CD8-positive, alpha-beta T cell (primary cell): ENCODE measurements at regions of chr6 and their contacts with region 1.

Region 1: DNA sequence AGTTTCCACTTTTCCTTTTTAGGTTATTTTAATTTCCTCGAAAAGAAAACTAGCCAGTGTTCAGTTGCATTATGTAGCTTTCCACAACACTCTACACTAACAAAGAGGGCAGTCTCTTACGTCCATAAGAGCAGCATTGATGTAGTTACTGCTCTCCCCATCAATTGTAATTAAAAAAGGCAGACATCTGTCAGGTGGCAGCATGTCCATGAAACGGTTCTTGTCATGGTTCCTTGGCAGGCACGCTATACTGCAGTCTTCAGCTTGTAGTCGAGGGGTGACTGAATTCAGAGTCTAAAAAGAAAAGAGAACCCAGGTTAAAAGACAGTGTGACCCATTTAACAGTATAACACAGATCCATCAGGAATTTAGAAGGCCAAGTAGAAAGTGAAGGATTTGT is 80.1 kb upstream of the THEMIS start:
- DNase-seq: no peak
- ATAC-seq: no peak
- H3K4me3 ChIP-seq: peak overlapping the region in 1 of 2 experiments; percentile 3
- H3K4me3 Mint-ChIP-seq: peak overlapping the region; percentile 76
- H3K27ac ChIP-seq: peak overlapping the region in 1 of 2 experiments; percentile 0
- H3K27ac Mint-ChIP-seq: peak overlapping the region; percentile 78
- H3K4me1 ChIP-seq: peaks cover 40% of the 10 kb centered on the region
- H3K4me1 Mint-ChIP-seq: peaks cover 61% of the 10 kb centered on the region
- H3K27me3 ChIP-seq: no peaks in the 10 kb centered on the region
- H3K27me3 Mint-ChIP-seq: no peaks in the 10 kb centered on the region
- CTCF ChIP-seq: no peak

Region 2: DNA sequence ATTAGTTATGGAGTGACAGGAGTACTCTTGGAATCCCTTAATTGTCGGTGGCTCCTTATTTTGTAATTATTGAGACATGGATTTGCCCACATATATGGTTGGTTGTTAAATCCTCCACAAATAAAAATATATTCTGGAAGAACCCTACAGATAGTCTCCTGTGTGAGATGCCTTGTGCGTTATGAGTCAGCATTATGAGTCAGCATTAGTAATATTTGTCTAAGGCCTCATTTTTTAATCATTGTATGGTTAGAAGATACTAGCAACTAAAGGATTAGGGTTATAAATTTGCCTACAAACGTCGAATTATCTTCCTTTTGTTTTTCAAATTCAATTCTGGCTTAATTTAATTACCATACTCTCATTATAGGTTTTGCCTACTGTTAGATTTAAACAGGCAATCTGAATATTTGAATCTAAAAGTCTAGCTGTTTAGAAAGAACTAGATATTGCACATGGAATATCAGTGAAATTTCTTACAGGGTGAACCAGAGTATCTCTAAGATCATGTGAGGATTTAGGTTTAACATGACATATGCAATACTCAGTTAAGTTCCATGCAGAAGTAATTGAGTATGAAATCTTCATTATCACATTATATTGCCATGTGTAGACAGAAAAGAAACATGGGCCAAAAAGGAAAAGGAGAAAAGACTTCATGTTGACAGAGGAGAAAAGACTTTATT is 398.1 kb before region 1 on chr6:
- CTCF ChIA-PET with region 1: no interaction called
- POLR2A ChIA-PET with region 1: no interaction called
- intact Hi-C with region 1: no loop called
- DNase-seq: no peak
- ATAC-seq: no peak
- H3K4me3 ChIP-seq: no peak overlapping the region
- H3K4me3 Mint-ChIP-seq: no peak overlapping the region
- H3K27ac ChIP-seq: no peak overlapping the region
- H3K27ac Mint-ChIP-seq: no peak overlapping the region
- H3K4me1 ChIP-seq: no peaks in the 10 kb centered on the region
- H3K4me1 Mint-ChIP-seq: no peaks in the 10 kb centered on the region
- H3K27me3 ChIP-seq: no peaks in the 10 kb centered on the region
- H3K27me3 Mint-ChIP-seq: no peaks in the 10 kb centered on the region
- CTCF ChIP-seq: no peak

Region 3: DNA sequence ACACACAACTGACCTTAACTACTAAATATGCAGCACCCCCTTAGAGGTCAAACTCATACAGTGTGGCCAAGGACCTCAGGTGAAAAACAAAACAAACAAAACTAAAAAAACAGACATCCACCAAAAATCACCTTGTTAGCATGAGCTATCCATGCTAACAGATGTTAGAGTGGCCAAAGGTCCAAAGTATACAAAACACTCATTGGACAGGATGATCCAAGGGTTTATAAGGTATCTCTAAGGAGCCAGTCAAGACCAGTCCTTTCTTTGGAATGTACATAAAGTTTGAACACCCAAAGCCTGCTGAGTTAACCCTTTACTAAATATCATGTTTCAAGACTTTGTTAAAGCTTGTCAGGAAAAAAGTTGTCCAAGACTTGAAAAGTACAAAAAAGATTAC is 115.9 kb before region 1 on chr6:
- CTCF ChIA-PET with region 1: no interaction called
- POLR2A ChIA-PET with region 1: no interaction called
- intact Hi-C with region 1: no loop called
- DNase-seq: no peak
- ATAC-seq: no peak
- H3K4me3 ChIP-seq: no peak overlapping the region
- H3K4me3 Mint-ChIP-seq: no peak overlapping the region
- H3K27ac ChIP-seq: peak overlapping the region in 1 of 2 experiments; percentile 9
- H3K27ac Mint-ChIP-seq: peak overlapping the region; percentile 72
- H3K4me1 ChIP-seq: peaks cover 49% of the 10 kb centered on the region
- H3K4me1 Mint-ChIP-seq: peaks cover 73% of the 10 kb centered on the region
- H3K27me3 ChIP-seq: no peaks in the 10 kb centered on the region
- H3K27me3 Mint-ChIP-seq: no peaks in the 10 kb centered on the region
- CTCF ChIP-seq: no peak

Region 4: DNA sequence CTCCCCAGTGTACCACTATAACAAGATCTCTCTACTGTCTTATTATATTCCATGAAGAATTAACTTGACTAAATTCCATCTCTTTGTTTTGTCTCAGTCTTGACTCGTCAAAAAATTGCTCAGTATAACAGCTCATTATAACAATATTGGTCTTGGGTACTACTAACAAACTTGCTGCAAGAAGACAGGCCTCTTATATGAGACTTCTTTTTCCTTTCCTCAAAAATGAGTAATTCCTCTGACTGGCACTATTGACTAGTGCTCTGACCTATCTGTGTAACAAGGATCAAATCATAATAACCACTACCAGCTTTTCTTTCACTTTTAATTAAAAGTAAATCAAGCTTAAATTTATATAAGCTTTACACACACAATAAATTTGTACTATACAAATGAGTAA is 11.1 kb after region 1 on chr6:
- CTCF ChIA-PET with region 1: interaction called, 4 read pairs
- POLR2A ChIA-PET with region 1: interaction called, 5 read pairs
- intact Hi-C with region 1: loop called in 1 of 2 experiments (anchors 1 kb)
- DNase-seq: no peak
- ATAC-seq: peak; percentile 59
- H3K4me3 ChIP-seq: peak overlapping the region in 1 of 2 experiments; percentile 8
- H3K4me3 Mint-ChIP-seq: peak overlapping the region; percentile 73
- H3K27ac ChIP-seq: peak overlapping the region; percentile 5 to 38
- H3K27ac Mint-ChIP-seq: peak overlapping the region; percentile 88
- H3K4me1 ChIP-seq: peaks cover 37% of the 10 kb centered on the region
- H3K4me1 Mint-ChIP-seq: peaks cover 52% of the 10 kb centered on the region
- H3K27me3 ChIP-seq: no peaks in the 10 kb centered on the region
- H3K27me3 Mint-ChIP-seq: no peaks in the 10 kb centered on the region
- CTCF ChIP-seq: no peak

Region 5: DNA sequence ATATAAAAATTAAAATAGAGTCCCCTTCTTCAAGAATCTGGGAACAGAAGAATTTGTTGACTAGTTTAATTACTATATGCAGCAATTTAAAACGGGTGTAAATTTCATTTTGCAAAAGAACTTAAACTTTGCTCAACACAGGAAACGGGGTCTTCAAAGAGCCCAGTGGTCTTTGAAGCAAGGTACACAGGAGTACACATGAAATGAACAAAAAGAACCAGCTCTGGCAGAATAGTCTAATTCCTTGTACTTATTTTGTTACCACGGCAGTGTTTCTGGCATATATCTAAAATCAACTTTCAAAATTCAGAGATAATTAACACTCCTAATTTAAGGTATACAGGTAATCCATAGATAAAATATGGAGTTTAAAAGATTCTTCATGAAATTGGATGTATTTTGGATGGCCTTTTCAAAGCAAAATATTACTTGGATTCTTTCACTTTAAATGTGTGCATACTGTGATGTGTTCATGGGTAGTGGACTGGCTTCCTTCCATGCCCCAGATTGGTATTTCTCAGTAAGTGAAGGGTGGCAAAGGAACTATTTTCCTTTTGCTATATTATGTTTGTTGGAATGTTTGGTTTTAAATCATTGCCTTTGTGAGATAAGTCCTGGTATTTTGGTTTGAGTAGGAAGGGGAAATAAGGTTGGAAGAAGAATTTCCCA is 16.6 kb after region 1 on chr6:
- CTCF ChIA-PET with region 1: no interaction called
- POLR2A ChIA-PET with region 1: interaction called, 5 read pairs
- intact Hi-C with region 1: loop called in 1 of 2 experiments (anchors 1 kb)
- DNase-seq: peak in 3 of 9 experiments; percentile 32 to 69 (median 44)
- ATAC-seq: peak; percentile 74
- H3K4me3 ChIP-seq: peak overlapping the region; percentile 18 to 33
- H3K4me3 Mint-ChIP-seq: peak overlapping the region; percentile 82
- H3K27ac ChIP-seq: peak overlapping the region; percentile 36 to 37
- H3K27ac Mint-ChIP-seq: peak overlapping the region; percentile 92
- H3K4me1 ChIP-seq: peaks cover 64% of the 10 kb centered on the region
- H3K4me1 Mint-ChIP-seq: peaks cover 68% of the 10 kb centered on the region
- H3K27me3 ChIP-seq: no peaks in the 10 kb centered on the region
- H3K27me3 Mint-ChIP-seq: no peaks in the 10 kb centered on the region
- CTCF ChIP-seq: no peak

Region 6: DNA sequence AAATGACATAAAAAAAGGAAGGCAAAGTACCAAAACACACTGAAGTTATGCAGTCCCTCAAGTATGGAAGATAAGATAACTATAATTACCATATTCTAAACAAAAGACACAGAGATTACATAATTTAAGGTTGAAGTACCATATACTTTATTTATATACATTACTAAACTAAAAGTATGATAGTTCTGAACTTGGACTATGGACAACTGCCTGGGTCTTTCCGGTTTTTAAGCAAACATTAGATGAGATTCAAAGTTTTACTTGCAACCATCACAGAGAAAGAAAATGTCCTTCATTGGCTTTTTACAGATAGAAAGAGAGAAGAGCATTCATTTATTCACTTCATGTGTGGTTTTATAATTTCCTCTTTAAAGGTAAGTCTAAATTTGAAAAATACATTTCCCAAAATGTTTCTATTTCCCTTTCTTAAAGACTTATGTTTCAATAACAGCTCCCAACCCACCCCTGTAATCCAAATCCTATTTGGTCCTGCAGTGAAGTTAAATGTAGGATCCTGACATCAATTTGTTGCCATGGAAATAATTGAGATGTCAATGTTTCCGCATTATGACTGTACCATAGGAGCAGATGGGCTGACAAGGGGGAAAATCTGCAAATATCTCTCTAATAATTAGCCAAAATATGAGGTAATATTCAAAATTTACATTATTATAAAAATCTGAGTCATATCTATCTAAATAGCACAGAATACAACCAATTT is 475.7 kb after region 1 on chr6:
- CTCF ChIA-PET with region 1: no interaction called
- POLR2A ChIA-PET with region 1: no interaction called
- intact Hi-C with region 1: no loop called
- DNase-seq: no peak
- ATAC-seq: no peak
- H3K4me3 ChIP-seq: no peak overlapping the region
- H3K4me3 Mint-ChIP-seq: no peak overlapping the region
- H3K27ac ChIP-seq: no peak overlapping the region
- H3K27ac Mint-ChIP-seq: no peak overlapping the region
- H3K4me1 ChIP-seq: no peaks in the 10 kb centered on the region
- H3K4me1 Mint-ChIP-seq: no peaks in the 10 kb centered on the region
- H3K27me3 ChIP-seq: no peaks in the 10 kb centered on the region
- H3K27me3 Mint-ChIP-seq: no peaks in the 10 kb centered on the region
- CTCF ChIP-seq: no peak

Region 7: DNA sequence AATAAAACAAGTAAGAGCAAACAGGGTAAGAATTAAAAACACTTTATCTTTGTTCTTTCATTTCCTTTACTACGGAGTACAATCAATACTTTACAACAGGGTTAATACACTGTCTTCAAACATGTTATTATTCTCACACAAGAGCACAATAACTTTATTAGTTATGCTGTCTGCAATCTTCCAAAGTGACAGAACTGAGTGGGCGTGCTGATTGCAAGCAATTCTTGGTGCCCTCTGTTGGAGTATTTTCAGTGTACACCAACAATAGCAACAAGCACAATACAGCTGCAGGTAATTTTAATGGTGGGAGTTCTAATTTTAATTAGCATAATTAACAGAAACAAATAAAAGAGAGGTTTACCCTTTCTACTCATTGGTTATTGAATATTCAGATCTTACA is 573.3 kb after region 1 on chr6:
- CTCF ChIA-PET with region 1: no interaction called
- POLR2A ChIA-PET with region 1: no interaction called
- intact Hi-C with region 1: no loop called
- DNase-seq: no peak
- ATAC-seq: no peak
- H3K4me3 ChIP-seq: no peak overlapping the region
- H3K4me3 Mint-ChIP-seq: no peak overlapping the region
- H3K27ac ChIP-seq: no peak overlapping the region
- H3K27ac Mint-ChIP-seq: no peak overlapping the region
- H3K4me1 ChIP-seq: no peaks in the 10 kb centered on the region
- H3K4me1 Mint-ChIP-seq: no peaks in the 10 kb centered on the region
- H3K27me3 ChIP-seq: no peaks in the 10 kb centered on the region
- H3K27me3 Mint-ChIP-seq: peaks cover 3% of the 10 kb centered on the region
- CTCF ChIP-seq: no peak